ENCODE measurements at regions of chr1 and their contacts with region 1.

Region 1: DNA sequence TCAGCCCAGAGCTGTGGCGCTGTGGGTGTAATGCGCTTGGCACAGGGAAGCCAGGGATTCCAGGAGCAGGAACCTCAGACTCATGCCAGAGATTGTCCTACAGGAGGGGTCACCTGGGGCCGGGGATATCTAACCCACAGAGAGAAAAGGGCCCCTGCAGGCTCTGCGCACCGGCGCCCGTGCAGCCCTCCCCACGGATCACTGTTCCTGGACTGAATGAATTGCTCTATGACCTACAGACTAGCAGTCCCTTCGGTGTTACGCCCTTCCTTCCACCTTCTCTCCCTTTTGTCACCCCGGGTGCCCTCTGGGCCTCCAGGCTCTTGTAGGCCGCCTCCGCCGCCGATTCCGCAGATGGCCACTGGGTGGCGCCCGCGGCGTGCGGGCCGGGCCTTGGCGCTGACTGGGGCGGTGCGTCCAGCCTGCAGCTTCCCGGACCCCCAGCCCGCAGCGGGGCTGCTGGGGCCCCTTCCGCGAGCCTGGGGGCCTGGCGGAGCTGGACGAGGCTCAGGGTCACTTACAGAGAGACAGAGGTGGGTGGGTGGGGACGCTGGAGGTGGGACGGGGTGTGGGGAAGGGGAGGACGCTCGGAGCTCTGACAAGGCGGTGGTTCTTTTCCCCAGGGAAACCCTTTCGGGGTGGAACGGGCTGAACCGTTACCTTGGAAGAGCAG is 101.3 kb downstream of the IER5 start:
- DNase-seq: peak; percentile 63 to 85
- ATAC-seq: peak; percentile 84 to 97
- H3K4me3 ChIP-seq: peak overlapping the region; percentile 33
- H3K27ac ChIP-seq: peak overlapping the region in 1 of 2 experiments; percentile 74; a peak in 4 of 6 replicates
- H3K4me1 ChIP-seq: no peaks in the 10 kb centered on the region
- CTCF ChIP-seq: peak; percentile 97
- EP300 ChIP-seq: no peak
- POLR2A ChIP-seq: no peak
- RAD21 ChIP-seq: peak; percentile 92 to 99

Region 2: DNA sequence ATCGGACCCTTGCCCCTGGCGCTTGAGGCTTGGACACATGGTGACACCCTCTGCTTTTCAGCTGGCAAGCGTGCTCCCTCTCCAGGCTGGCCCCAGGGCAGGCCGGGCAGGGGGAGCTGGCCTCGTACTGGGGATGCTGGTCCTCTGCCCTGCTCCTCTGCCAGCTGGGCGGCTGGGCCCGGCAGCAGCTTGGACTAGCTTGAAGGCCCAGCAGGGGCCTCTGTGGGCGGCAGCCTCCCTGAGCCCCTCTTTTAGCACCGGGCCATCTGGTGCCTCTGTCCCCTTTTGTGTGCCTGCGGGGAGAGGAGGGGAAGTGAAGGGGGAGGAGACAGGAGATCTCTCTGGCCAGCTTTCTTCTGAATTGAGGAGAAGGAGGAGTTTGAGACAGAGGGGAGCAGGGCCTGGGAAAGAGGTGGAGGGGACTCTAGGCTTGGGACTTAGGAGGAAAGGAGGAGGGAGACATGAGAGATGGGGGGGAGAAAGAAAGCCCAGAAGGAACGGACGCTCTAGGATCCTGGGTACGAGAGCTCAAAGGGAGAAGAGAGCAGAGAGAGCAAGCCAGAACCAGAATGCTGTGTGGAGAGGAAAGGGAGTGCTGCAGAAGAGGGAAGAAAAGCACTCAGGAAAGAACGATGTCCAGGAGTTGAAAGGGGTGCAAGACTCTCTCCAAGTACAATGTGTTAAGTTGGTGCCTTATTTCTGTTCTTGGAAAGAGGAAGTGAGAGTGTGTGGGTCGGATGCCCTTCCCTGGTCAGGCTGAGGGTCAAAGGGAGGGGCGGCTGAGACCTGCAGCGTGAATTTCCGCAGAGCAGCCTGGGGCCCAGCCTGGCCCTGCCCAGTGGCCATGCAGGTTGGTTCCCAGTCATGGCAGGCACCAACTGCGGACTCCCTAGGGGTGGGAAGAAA is 61.0 kb before region 1 on chr1:
- CTCF ChIA-PET with region 1: no interaction called
- POLR2A ChIA-PET with region 1: no interaction called
- DNase-seq: no peak
- ATAC-seq: peak in 1 of 2 experiments; percentile 7; a peak in 2 of 6 replicates
- H3K4me3 ChIP-seq: no peak overlapping the region
- H3K27ac ChIP-seq: peak overlapping the region; percentile 73 to 90
- H3K4me1 ChIP-seq: peaks cover 76% of the 10 kb centered on the region
- CTCF ChIP-seq: no peak
- EP300 ChIP-seq: no peak
- POLR2A ChIP-seq: no peak
- RAD21 ChIP-seq: no peak

Region 3: DNA sequence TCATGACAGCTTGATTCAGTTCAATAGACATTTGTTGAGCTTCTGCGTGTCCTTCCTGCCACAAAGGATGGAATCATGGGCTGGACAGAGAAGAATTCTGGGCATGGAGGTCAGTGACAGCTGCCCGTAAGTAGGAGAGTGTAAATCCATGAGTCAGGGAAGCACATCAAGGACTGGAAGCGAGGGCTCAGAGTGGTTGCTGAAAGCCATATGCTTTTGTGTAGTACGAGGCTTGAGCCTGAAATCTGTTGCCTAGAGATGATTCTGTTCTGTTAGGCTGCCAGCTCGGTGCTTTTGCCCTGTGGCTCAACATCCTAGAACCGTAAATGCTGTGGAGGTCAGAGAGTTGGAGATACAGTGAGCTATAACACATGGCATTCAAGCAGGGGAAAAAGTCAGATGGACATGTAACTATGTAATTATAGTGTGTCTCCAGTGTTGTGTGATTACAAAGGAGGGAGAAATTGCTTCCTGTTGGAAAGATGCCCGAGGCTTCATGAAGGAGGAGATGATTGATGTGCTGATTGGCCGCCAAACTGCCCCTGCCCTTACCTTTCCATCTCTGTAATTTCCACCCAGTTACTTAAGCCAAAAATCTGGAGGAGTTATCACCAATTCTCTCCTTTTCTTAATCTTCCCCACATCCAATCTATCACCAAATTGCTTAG is 200.7 kb after region 1 on chr1:
- CTCF ChIA-PET with region 1: interaction called, 11 read pairs
- POLR2A ChIA-PET with region 1: no interaction called
- DNase-seq: no peak
- ATAC-seq: no peak
- H3K4me3 ChIP-seq: no peak overlapping the region
- H3K27ac ChIP-seq: no peak overlapping the region
- H3K4me1 ChIP-seq: no peaks in the 10 kb centered on the region
- CTCF ChIP-seq: no peak
- EP300 ChIP-seq: no peak
- POLR2A ChIP-seq: no peak
- RAD21 ChIP-seq: no peak

Region 4: GRCh38 chr1:181409981-181410380 is 220.2 kb after region 1 on chr1:
- CTCF ChIA-PET with region 1: interaction called, 11 read pairs
- POLR2A ChIA-PET with region 1: no interaction called
- DNase-seq: no peak
- ATAC-seq: no peak
- H3K4me3 ChIP-seq: no peak overlapping the region
- H3K27ac ChIP-seq: no peak overlapping the region
- H3K4me1 ChIP-seq: no peaks in the 10 kb centered on the region
- CTCF ChIP-seq: no peak
- EP300 ChIP-seq: no peak
- POLR2A ChIP-seq: no peak
- RAD21 ChIP-seq: no peak

Region 5: GRCh38 chr1:181424786-181425403 is 235.1 kb after region 1 on chr1:
- CTCF ChIA-PET with region 1: interaction called, 188 read pairs
- POLR2A ChIA-PET with region 1: no interaction called
- DNase-seq: peak; percentile 70 to 73
- ATAC-seq: peak; percentile 80 to 93
- H3K4me3 ChIP-seq: peak overlapping the region; percentile 28; the same call in 1 of the 3 replicates
- H3K27ac ChIP-seq: no peak overlapping the region
- H3K4me1 ChIP-seq: no peaks in the 10 kb centered on the region
- CTCF ChIP-seq: peak; percentile 100
- EP300 ChIP-seq: no peak
- POLR2A ChIP-seq: no peak
- RAD21 ChIP-seq: peak; percentile 92 to 97